Activated B cell treated with CpG ODN at 0.5 μM for 24 hours (primary cell): ENCODE measurements at regions of chr9 and their contacts with region 1.

Region 1: GRCh38 chr9:100598641-100599145 is 20.8 kb downstream of the CAVIN4 start:
- DNase-seq: peak; percentile 73
- ATAC-seq: peak; percentile 91
- H3K4me3 Mint-ChIP-seq: peak overlapping the region; percentile 81
- H3K27ac Mint-ChIP-seq: no peak overlapping the region
- H3K4me1 Mint-ChIP-seq: peaks cover 18% of the 10 kb centered on the region
- H3K27me3 Mint-ChIP-seq: no peaks in the 10 kb centered on the region
- CTCF ChIP-seq: no peak

Region 2: DNA sequence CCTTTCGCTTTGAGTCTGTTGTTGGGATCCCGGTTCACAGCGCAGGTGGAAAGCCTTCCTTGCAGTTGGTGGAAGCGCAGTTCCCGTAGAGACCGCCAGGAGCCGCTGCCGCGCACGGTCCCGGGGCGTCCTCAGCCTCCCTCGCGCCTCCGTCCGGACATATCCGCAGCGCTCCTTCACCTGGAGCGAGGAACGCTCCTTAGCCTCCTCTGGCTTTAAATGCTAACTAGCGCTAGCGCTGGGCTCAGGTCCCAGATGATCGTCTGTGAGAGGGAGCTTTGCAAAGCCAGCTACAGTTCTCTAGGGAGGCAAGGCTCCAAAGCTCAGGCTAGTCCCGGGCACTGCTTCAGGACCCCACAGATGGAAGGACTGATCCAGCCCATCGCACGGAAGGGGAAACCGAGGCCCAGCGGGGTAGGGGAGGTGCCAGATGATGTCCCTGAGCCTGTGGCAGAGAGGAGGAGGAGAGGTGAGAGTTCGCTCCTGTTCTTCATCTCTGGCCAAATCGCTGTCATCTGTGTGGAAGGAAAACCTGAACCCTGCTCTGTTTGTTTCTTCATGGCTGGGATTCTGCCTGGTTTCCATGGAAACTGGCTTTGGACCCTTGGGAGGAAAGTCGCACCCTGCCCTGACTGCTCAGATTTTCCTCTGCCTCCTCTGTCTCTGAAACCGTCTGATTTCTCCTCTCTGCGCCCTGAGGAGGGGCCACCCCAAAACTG is 1623.5 kb before region 1 on chr9:
- CTCF ChIA-PET with region 1: interaction called, 5 read pairs
- POLR2A ChIA-PET with region 1: no interaction called
- intact Hi-C with region 1: loop called (anchors 1 kb)
- DNase-seq: peak; percentile 80
- ATAC-seq: peak; percentile 98
- H3K4me3 Mint-ChIP-seq: peak overlapping the region; percentile 15
- H3K27ac Mint-ChIP-seq: no peak overlapping the region
- H3K4me1 Mint-ChIP-seq: peaks cover 5% of the 10 kb centered on the region
- H3K27me3 Mint-ChIP-seq: peaks cover 2% of the 10 kb centered on the region
- CTCF ChIP-seq: peak; percentile 89

Region 3: GRCh38 chr9:100352727-100353505 is 245.8 kb before region 1 on chr9 and contains the start of gene TEX10:
- CTCF ChIA-PET with region 1: no interaction called
- POLR2A ChIA-PET with region 1: interaction called, 3 read pairs
- intact Hi-C with region 1: loop called (anchors 1 kb)
- DNase-seq: peak; percentile 89
- ATAC-seq: peak; percentile 93
- H3K4me3 Mint-ChIP-seq: peak within 1 kb of the TSS; percentile 90
- H3K27ac Mint-ChIP-seq: peak within 1 kb of the TSS; percentile 87
- H3K4me1 Mint-ChIP-seq: peaks cover 67% of the 10 kb centered on the region
- H3K27me3 Mint-ChIP-seq: no peaks in the 10 kb centered on the region
- CTCF ChIP-seq: no peak
- total RNA-seq, gene TEX10: 26.5 and 28.7 TPM in 2 replicates

Region 4: DNA sequence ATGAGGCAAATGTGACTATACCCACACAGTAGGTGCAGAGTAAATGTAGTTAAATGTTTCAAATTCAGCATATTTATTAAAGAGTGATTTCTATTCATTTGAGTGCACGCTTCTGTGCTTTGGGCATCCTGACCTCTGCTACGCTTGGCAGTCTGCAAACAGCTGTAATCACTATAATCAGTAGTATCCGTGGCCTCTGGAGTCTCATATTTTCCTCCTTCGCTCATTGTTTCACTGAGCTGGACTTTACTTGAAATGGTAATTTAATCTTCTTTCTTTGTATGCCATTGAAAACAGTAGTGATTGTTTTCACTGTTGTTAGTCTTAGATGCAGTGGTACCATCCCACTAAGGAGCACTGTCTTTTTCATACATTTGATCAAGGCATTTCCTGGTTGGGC is 64.3 kb before region 1 on chr9:
- CTCF ChIA-PET with region 1: no interaction called
- POLR2A ChIA-PET with region 1: no interaction called
- intact Hi-C with region 1: no loop called
- DNase-seq: no peak
- ATAC-seq: no peak
- H3K4me3 Mint-ChIP-seq: no peak overlapping the region
- H3K27ac Mint-ChIP-seq: no peak overlapping the region
- H3K4me1 Mint-ChIP-seq: no peaks in the 10 kb centered on the region
- H3K27me3 Mint-ChIP-seq: no peaks in the 10 kb centered on the region
- CTCF ChIP-seq: no peak

Region 5: GRCh38 chr9:101311758-101312420 is 713.2 kb after region 1 on chr9:
- CTCF ChIA-PET with region 1: interaction called, 30 read pairs
- POLR2A ChIA-PET with region 1: no interaction called
- intact Hi-C with region 1: no loop called
- DNase-seq: no peak
- ATAC-seq: peak; percentile 45
- H3K4me3 Mint-ChIP-seq: no peak overlapping the region
- H3K27ac Mint-ChIP-seq: no peak overlapping the region
- H3K4me1 Mint-ChIP-seq: no peaks in the 10 kb centered on the region
- H3K27me3 Mint-ChIP-seq: peaks cover 6% of the 10 kb centered on the region
- CTCF ChIP-seq: peak; percentile 56